Cardiac septum (tissue), 1 donor: ENCODE measurements at regions of chr7 and their contacts with region 1.

Region 1: GRCh38 chr7:116271963-116272839 is 61.9 kb downstream of the TES start:
- DNase-seq: no peak

Region 2: DNA sequence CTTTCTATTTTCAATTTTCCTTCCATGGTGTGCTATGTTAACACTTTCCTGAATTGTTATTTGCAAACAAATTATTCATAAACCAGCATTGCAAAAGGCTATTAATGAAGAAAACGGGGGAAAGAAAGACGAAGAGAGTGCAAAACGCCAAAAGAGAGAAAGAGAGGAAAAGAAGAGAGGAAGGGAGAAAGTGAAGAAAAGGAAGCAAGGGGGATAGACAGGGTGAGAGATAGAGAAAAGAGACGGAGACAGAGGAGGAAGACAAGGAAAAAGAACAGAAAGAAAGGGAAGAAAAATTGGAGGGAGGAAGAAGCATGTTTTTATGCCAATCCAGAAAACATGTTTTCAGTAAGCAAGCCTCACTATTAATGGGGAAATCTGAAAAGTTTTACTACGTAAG is 552.2 kb before region 1 on chr7:
- intact Hi-C with region 1: no loop called
- DNase-seq: no peak

Region 3: DNA sequence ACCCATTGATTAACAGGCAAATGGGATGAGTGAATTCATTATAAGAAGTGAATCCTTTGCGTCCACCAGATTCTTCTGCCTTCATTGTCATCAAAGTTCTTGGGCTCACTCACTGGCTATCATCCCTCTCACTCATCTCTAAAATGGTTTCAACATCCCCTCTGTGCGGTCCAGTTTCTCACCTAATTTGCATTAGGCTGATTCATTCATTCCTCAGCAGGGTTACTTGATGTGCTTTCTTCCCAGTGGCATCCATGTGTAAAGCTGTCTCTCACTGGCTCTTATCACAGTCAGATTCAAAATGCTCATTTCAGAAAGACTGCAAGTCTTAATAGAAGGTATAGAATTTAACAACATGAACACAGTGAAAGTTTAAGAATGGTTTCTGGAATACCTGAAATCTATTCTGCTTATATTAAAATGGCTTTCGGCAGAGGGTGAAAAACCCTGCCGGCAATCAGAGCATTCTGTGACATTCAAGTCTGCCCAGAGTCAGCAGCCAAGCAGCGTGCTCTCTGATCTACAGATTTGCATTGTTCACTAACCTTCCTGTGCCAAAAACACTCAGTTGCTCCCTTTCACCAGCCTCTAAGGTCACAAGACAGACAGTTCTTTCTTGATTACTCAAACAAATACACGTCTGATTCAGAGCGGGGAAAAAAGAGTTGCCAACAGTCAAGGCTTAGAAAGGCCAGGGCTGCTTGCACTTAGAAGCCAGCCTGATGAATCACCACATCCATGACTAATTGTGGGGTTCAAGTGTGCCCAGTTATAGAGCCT is 44.8 kb after region 1 on chr7:
- intact Hi-C with region 1: loop called (anchors 5 kb)
- DNase-seq: no peak

Region 4: DNA sequence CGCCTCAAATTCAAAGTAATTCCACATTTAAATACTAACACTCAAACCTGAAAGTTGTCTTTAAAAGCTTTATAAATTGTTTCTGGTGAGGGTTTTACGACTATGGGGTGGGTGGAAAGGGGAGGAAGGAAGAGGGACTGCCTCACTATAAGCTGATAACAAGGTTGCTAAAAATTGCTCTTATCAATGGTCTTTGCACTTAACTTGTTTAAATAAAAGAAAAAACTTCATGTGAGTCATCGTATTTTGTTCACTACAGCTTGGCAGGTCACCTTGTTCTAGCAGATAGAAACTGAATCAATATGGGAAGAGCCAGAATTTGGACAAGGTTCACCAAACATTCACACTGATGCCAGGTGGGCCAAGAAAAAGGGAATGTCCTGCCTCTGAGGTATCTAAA is 67.4 kb after region 1 on chr7:
- intact Hi-C with region 1: no loop called
- DNase-seq: no peak

Region 5: DNA sequence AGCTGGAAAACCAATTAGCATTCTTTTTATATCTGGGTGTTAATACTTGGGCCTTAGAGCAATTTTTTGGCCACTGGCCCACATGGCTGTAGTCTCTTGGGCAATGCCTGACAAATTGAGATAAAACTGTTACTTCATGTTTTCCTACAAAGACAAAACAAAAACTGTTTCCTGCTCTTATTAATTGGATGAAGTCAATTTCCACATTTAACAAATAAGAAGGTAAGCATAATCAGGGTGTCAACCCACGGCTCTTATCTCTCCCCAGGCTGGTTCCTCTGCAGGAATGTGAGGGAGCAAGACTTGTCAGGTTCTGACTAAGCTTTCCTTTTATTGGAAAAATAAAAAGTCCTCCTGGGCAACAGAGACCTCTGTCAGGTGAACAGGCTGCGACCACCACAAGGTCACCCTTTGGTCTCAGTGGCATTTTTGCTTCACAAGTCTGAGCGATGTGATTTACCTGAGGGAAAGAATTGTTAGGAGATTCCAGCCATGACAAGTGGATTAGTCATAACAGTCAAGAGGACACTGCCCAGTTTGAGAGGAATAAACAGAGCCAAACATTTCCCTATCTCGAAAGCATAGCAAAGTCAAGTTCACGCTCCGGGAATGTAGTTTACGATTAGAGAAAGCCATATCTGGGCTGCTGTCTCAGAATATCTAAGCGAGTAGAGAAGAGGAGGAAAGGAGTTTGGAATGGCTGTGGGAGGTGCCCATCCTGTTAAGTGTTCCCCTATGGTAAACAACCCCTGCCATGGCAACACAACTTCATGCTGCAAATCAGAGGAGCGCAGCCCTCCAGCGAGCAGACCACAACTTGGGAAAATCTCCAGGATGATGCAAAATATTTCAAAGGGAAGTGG is 82.6 kb after region 1 on chr7:
- intact Hi-C with region 1: loop called (anchors 5 kb)
- DNase-seq: peak; percentile 83

Region 6: GRCh38 chr7:116499168-116500077 is 227.2 kb after region 1 on chr7 and contains the start of gene CAV2:
- intact Hi-C with region 1: loop called (anchors 5 kb)
- DNase-seq: peak; percentile 86
- total RNA-seq, gene CAV2: 311 TPM